PC-9 (cell line): ENCODE measurements at regions of chr10 and their contacts with region 1.

Region 1: GRCh38 chr10:10794791-10795191 is 222.9 kb upstream of the CELF2 start:
- DNase-seq: peak; percentile 72 to 94
- H3K4me3 ChIP-seq: peak overlapping the region; percentile 57
- H3K27ac ChIP-seq: peak overlapping the region; percentile 99
- H3K4me1 ChIP-seq: peaks cover 71% of the 10 kb centered on the region
- H3K27me3 ChIP-seq: no peaks in the 10 kb centered on the region
- CTCF ChIP-seq: no peak

Region 2: GRCh38 chr10:10642751-10643150 is 152.0 kb before region 1 on chr10:
- CTCF ChIA-PET with region 1: no interaction called
- POLR2A ChIA-PET with region 1: no interaction called
- intact Hi-C with region 1: no loop called
- DNase-seq: no peak
- H3K4me3 ChIP-seq: no peak overlapping the region
- H3K27ac ChIP-seq: no peak overlapping the region
- H3K4me1 ChIP-seq: no peaks in the 10 kb centered on the region
- H3K27me3 ChIP-seq: peaks cover 32% of the 10 kb centered on the region
- CTCF ChIP-seq: no peak

Region 3: DNA sequence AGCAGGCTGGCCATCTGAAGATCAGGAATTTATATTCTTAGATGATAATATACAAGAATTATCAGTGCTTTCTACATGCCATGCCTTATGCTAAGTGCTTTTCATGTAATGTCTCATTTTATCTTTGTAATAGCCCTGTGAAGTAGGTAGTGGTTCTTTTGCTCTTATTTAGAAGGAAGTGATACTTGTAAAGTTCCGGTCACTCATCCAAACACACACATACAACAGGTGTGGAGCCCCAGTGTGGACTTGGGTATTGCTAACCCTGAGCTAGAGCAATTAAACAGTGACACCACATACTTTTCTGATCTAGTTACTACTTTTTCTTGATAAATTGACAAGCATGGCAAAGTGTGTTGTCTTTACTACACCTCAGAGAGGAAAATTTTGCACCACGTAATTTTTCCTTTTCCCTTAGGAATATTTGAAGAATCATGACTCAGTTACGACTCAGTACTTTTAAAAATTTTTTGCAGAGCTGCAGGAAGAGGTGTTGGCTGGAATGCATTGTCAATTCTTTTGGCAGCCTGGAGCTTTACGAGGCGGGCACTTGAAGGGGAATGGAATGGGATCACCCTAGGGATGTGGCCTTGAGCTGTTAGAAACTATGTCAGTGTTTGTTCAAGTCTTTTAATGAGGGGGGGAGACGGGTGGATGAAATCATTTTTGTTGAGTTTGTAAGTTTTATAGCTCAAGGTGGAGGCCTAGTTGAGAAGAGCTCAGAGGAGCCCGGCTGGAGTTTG is 10.4 kb after region 1 on chr10:
- CTCF ChIA-PET with region 1: no interaction called
- POLR2A ChIA-PET with region 1: interaction called, 8 read pairs
- intact Hi-C with region 1: loop called (anchors 1 kb)
- DNase-seq: peak; percentile 58 to 90
- H3K4me3 ChIP-seq: no peak overlapping the region
- H3K27ac ChIP-seq: peak overlapping the region; percentile 87
- H3K4me1 ChIP-seq: peaks cover 29% of the 10 kb centered on the region
- H3K27me3 ChIP-seq: no peaks in the 10 kb centered on the region
- CTCF ChIP-seq: no peak

Region 4: DNA sequence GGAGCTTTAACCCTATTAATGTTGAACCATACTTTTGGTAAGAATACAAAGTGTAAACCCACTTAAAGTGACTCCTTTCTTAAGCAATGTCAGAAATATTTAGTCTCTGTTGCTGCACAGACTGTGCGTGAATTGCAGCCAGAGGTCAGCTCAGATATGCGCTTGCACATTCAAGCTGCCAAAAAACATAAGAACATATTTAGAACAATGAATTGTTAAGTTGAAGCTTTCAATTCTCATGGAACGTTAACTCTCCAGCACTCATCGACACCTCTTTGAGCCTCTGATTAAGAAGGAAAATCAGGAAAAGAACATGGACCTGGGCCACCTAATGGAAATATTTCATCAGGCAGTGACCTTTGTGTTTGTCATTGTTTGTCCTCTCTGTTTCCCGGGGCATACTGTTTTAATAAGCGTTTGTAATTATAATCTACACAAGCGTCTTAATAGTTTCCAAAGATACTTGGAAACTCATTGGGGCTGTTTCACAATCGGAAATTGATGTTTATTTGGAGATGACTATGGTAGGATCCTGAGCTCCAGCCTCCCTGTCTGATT is 29.9 kb after region 1 on chr10:
- CTCF ChIA-PET with region 1: no interaction called
- POLR2A ChIA-PET with region 1: interaction called, 55 read pairs
- intact Hi-C with region 1: no loop called
- DNase-seq: no peak
- H3K4me3 ChIP-seq: no peak overlapping the region
- H3K27ac ChIP-seq: no peak overlapping the region
- H3K4me1 ChIP-seq: peaks cover 9% of the 10 kb centered on the region
- H3K27me3 ChIP-seq: no peaks in the 10 kb centered on the region
- CTCF ChIP-seq: no peak

Region 5: DNA sequence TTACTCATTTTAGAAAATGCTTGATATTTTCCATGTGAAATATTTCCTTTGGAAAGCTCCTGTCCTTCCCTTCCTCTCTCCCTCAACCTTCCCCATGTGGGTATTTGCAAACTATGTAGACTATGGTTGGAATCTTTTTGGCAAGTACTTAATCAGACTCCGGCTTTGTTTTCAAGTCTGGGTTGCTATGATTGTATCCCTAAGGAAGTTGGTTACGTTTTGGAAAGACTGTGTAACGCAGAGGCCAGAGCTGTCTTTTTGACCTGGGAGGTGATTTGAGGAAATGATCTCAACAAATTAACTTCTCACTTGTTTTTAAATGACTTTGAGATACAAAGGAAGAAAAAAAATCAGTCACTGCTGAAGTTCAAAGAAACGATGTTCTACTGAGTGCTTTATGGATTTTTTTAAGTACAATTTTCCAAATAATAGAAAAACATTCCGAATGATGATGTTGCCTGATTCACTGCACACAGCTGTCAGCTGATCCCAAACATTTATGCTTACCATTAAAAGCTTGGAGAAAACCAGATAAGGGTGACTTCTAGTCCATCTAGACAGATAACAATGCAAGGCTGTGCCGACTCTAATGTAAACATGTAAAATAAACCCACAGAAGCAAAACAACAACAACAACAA is 77.4 kb after region 1 on chr10:
- CTCF ChIA-PET with region 1: no interaction called
- POLR2A ChIA-PET with region 1: interaction called, 9 read pairs
- intact Hi-C with region 1: loop called (anchors 1 kb)
- DNase-seq: peak; percentile 32 to 70
- H3K4me3 ChIP-seq: no peak overlapping the region
- H3K27ac ChIP-seq: no peak overlapping the region
- H3K4me1 ChIP-seq: no peaks in the 10 kb centered on the region
- H3K27me3 ChIP-seq: no peaks in the 10 kb centered on the region
- CTCF ChIP-seq: no peak

Region 6: GRCh38 chr10:10911471-10911921 is 116.7 kb after region 1 on chr10:
- CTCF ChIA-PET with region 1: no interaction called
- POLR2A ChIA-PET with region 1: no interaction called
- intact Hi-C with region 1: loop called (anchors 1 kb)
- DNase-seq: peak; percentile 87 to 91
- H3K4me3 ChIP-seq: peak overlapping the region; percentile 46
- H3K27ac ChIP-seq: peak overlapping the region; percentile 60
- H3K4me1 ChIP-seq: peaks cover 16% of the 10 kb centered on the region
- H3K27me3 ChIP-seq: no peaks in the 10 kb centered on the region
- CTCF ChIP-seq: no peak

Region 7: DNA sequence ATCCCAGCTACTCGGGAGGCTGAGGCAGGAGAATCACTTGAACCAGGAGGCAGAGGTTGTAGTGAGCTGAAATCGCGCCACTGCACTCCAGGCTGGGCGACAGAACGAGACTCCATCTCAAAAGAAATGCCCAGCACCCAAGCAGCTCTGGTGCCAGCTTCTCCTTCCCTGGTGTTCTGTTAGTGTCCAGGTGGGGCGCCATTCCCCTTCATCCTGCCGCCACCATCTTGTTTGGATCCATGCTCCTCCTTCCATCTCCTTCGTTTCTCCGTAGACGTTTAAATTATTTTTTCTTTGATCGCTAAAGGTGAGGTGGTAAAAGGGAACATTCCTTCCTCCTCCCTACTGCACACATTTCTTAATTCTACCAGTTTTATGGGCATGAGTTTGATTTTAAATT is 1058.7 kb after region 1 on chr10:
- CTCF ChIA-PET with region 1: no interaction called
- POLR2A ChIA-PET with region 1: interaction called, 45 read pairs
- intact Hi-C with region 1: no loop called
- DNase-seq: no peak
- H3K4me3 ChIP-seq: no peak overlapping the region
- H3K27ac ChIP-seq: no peak overlapping the region
- H3K4me1 ChIP-seq: no peaks in the 10 kb centered on the region
- H3K27me3 ChIP-seq: no peaks in the 10 kb centered on the region
- CTCF ChIP-seq: 0 out of 2 replicates have a peak, but pooled peaks have one; percentile 27